Heart left ventricle (tissue), 16 donors: ENCODE measurements at regions of chr7 and their contacts with region 1.

Region 1: DNA sequence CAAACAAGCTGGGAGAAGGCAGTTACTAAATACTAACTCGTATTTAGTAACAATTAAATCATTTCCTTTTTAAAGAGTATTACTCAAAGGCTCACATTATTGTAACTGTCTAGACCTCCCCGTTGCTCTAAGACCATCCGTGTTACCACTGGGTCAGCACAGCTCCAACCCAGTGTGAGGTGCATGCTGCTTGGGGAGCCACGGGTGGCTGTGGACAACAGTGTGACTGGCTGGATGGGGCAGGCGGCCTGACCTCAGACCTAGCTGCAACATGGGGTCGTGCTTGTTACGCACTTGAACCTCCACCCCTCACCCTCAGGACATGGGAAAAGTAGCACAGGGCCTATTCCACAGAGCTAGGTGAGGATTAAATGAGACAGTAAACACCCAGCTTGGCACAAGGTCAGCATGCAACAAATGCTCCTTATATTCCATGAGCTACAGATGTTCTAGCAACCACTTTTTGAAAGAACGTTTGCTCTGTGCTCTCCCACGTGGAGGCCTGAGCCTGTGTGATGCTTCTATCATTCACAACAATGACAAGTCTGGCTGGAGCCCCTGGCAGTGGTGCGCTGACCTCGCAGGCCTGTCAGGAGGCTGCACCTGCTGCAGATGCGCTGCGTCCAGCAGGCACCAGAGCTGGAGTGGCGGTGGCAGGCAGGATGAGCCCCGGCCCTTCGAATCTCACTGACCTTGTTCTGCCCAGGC is 135.7 kb downstream of the PKD1L1 start:
- DNase-seq: no peak
- ATAC-seq: no peak
- H3K4me3 ChIP-seq: no peak overlapping the region
- H3K27ac ChIP-seq: no peak overlapping the region
- H3K4me1 ChIP-seq: peaks cover 0 to 46% (median 12%) of the 10 kb centered on the region in 12 donors
- H3K27me3 ChIP-seq: no peaks in the 10 kb centered on the region
- CTCF ChIP-seq: no peak
- POLR2A ChIP-seq: no peak

Region 2: GRCh38 chr7:45902820-45903219 is 1909.8 kb before region 1 on chr7:
- intact Hi-C with region 1: loop called in 1 of 10 experiments (anchors 5 kb)
- DNase-seq: no peak
- ATAC-seq: no peak
- H3K4me3 ChIP-seq: no peak overlapping the region
- H3K27ac ChIP-seq: no peak overlapping the region
- H3K4me1 ChIP-seq: no peaks in the 10 kb centered on the region
- H3K27me3 ChIP-seq: no peaks in the 10 kb centered on the region
- CTCF ChIP-seq: no peak
- POLR2A ChIP-seq: no peak

Region 3: GRCh38 chr7:47710201-47710935 is 102.2 kb before region 1 on chr7:
- intact Hi-C with region 1: no loop called
- DNase-seq: peak in 1 of 5 donors; percentile 15
- ATAC-seq: peak; percentile 14 to 45 (median 31)
- H3K4me3 ChIP-seq: no peak overlapping the region
- H3K27ac ChIP-seq: no peak overlapping the region
- H3K4me1 ChIP-seq: peaks cover 0 to 5% (median 0%) of the 10 kb centered on the region in 12 donors
- H3K27me3 ChIP-seq: no peaks in the 10 kb centered on the region
- CTCF ChIP-seq: no peak
- POLR2A ChIP-seq: no peak

Region 4: DNA sequence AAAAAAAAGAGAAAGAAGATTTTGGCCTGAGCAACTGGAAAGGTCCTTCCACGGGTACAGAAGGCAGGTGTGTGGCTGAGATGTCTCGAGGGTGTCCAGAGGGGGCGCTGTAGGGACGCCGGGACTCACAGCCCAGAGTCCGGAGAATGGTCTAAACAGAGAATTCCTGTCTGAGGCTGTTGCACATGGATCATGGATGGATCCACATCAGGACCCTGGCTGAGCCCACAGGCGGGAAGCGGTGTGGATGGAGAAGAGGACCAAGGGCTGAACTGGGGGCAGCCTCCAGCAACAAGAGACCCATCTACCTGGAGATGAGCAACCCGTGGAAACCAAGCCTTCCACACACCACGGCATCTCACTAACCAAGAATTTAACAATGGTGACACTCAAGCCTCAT is 80.7 kb after region 1 on chr7:
- intact Hi-C with region 1: no loop called
- DNase-seq: no peak
- ATAC-seq: peak in 1 of 4 donors; percentile 12
- H3K4me3 ChIP-seq: no peak overlapping the region
- H3K27ac ChIP-seq: no peak overlapping the region
- H3K4me1 ChIP-seq: no peaks in the 10 kb centered on the region
- H3K27me3 ChIP-seq: no peaks in the 10 kb centered on the region
- CTCF ChIP-seq: peak in 5 of 12 donors; percentile 13 to 33 (median 28)
- POLR2A ChIP-seq: no peak